GM18951 (cell line): ENCODE measurements at regions of chr3 and their contacts with region 1.

Region 1: GRCh38 chr3:37963016-37963415 is 27.6 kb upstream of the VILL start:
- POLR2A ChIP-seq: no peak

Region 2: DNA sequence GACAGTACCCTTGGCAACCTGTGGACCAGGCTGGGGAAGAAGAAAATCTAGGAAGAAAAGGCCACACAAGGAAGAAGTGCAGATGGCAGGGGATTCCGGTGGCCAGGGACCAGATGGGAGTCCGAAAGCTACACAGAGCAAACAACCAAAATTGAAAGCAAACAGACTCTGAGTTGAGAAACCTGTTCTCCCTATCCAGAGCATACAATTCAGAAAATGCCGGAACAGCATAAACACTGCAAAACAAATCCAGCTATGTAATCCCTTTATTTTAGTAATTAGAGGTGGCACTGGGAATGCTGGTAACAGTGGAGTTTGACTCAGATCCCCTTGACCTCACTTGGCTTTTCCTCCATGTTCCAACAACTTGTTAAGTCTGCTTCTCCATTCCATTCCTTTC is 367.7 kb before region 1 on chr3:
- in situ Hi-C with region 1: no loop called
- POLR2A ChIP-seq: no peak

Region 3: GRCh38 chr3:37855363-37855970 is 107.5 kb before region 1 on chr3:
- in situ Hi-C with region 1: loop called (anchors 5 kb)
- POLR2A ChIP-seq: no peak